Activated naive CD4-positive, alpha-beta T cell treated with anti-CD3 and anti-CD28 coated beads for 36 hours (primary cell): ENCODE measurements at regions of chr12 and their contacts with region 1.

Region 1: GRCh38 chr12:84502907-84503787 is 409.5 kb downstream of the SLC6A15 start:
- DNase-seq: peak; percentile 52
- H3K4me3 Mint-ChIP-seq: no peak overlapping the region
- H3K27ac Mint-ChIP-seq: no peak overlapping the region
- H3K4me1 Mint-ChIP-seq: no peaks in the 10 kb centered on the region
- H3K27me3 Mint-ChIP-seq: no peaks in the 10 kb centered on the region

Region 2: GRCh38 chr12:82527165-82527780 is 1975.9 kb before region 1 on chr12:
- CTCF ChIA-PET with region 1: no interaction called
- intact Hi-C with region 1: loop called (anchors 1 kb)
- DNase-seq: peak; percentile 20
- H3K4me3 Mint-ChIP-seq: no peak overlapping the region
- H3K27ac Mint-ChIP-seq: no peak overlapping the region
- H3K4me1 Mint-ChIP-seq: no peaks in the 10 kb centered on the region
- H3K27me3 Mint-ChIP-seq: peaks cover 3% of the 10 kb centered on the region

Region 3: GRCh38 chr12:83005534-83006197 is 1497.5 kb before region 1 on chr12:
- CTCF ChIA-PET with region 1: no interaction called
- intact Hi-C with region 1: loop called (anchors 5 kb)
- DNase-seq: no peak
- H3K4me3 Mint-ChIP-seq: no peak overlapping the region
- H3K27ac Mint-ChIP-seq: no peak overlapping the region
- H3K4me1 Mint-ChIP-seq: no peaks in the 10 kb centered on the region
- H3K27me3 Mint-ChIP-seq: no peaks in the 10 kb centered on the region

Region 4: GRCh38 chr12:83826112-83826511 is 677.0 kb before region 1 on chr12:
- CTCF ChIA-PET with region 1: no interaction called
- intact Hi-C with region 1: loop called (anchors 2 kb)
- DNase-seq: peak; percentile 54
- H3K4me3 Mint-ChIP-seq: no peak overlapping the region
- H3K27ac Mint-ChIP-seq: no peak overlapping the region
- H3K4me1 Mint-ChIP-seq: no peaks in the 10 kb centered on the region
- H3K27me3 Mint-ChIP-seq: no peaks in the 10 kb centered on the region

Region 5: GRCh38 chr12:84842406-84843013 is 339.4 kb after region 1 on chr12:
- CTCF ChIA-PET with region 1: no interaction called
- intact Hi-C with region 1: loop called (anchors 5 kb)
- DNase-seq: peak; percentile 13
- H3K4me3 Mint-ChIP-seq: no peak overlapping the region
- H3K27ac Mint-ChIP-seq: no peak overlapping the region
- H3K4me1 Mint-ChIP-seq: peaks cover 14% of the 10 kb centered on the region
- H3K27me3 Mint-ChIP-seq: no peaks in the 10 kb centered on the region